ENCODE measurements at regions of chr20 and their contacts with region 1.

Region 1: DNA sequence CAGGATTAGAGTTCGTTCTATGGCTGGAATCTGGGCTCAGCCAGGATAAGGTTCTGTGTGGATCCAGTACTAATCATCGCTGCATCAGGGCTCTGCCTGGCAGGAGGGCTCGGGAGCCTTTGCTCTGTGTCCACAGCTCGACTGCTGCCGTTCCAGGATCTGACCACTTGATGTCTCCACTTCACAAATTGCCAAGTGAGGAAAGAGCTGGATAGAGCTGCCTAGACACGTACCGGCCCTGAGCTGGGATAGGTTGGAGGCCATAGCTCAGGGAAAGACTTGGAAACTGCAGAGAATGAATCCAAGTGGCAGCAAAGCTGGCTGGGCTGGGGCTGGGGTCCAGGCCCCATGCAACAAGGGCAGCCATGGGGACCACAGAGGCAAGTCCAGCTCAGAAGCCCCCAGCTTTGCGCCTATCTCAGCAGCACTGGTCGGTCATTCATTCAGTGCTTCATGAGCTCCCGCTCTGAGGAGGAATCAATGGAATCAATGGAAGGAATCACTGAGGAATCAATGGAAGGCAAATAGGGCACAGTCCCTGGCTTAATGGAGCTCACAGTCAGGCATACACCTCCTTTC is 38.0 kb upstream of the TOP1 start:
- DNase-seq: peak; percentile 80
- H3K4me3 Mint-ChIP-seq: no peak overlapping the region
- H3K27ac Mint-ChIP-seq: peak overlapping the region; percentile 71
- H3K4me1 Mint-ChIP-seq: peaks cover 42% of the 10 kb centered on the region
- H3K27me3 Mint-ChIP-seq: peaks cover 2% of the 10 kb centered on the region

Region 2: GRCh38 chr20:40931410-40932044 is 59.1 kb before region 1 on chr20:
- CTCF ChIA-PET with region 1: no interaction called
- DNase-seq: no peak
- H3K4me3 Mint-ChIP-seq: no peak overlapping the region
- H3K27ac Mint-ChIP-seq: no peak overlapping the region
- H3K4me1 Mint-ChIP-seq: no peaks in the 10 kb centered on the region
- H3K27me3 Mint-ChIP-seq: peaks cover 11% of the 10 kb centered on the region

Region 3: GRCh38 chr20:40970201-40970600 is 20.4 kb before region 1 on chr20:
- CTCF ChIA-PET with region 1: interaction called, 21 read pairs
- DNase-seq: no peak
- H3K4me3 Mint-ChIP-seq: no peak overlapping the region
- H3K27ac Mint-ChIP-seq: no peak overlapping the region
- H3K4me1 Mint-ChIP-seq: peaks cover 11% of the 10 kb centered on the region
- H3K27me3 Mint-ChIP-seq: peaks cover 52% of the 10 kb centered on the region

Region 4: GRCh38 chr20:41018143-41018542 is 27.5 kb after region 1 on chr20:
- CTCF ChIA-PET with region 1: interaction called, 11 read pairs
- DNase-seq: no peak
- H3K4me3 Mint-ChIP-seq: no peak overlapping the region
- H3K27ac Mint-ChIP-seq: no peak overlapping the region
- H3K4me1 Mint-ChIP-seq: no peaks in the 10 kb centered on the region
- H3K27me3 Mint-ChIP-seq: peaks cover 23% of the 10 kb centered on the region

Region 5: DNA sequence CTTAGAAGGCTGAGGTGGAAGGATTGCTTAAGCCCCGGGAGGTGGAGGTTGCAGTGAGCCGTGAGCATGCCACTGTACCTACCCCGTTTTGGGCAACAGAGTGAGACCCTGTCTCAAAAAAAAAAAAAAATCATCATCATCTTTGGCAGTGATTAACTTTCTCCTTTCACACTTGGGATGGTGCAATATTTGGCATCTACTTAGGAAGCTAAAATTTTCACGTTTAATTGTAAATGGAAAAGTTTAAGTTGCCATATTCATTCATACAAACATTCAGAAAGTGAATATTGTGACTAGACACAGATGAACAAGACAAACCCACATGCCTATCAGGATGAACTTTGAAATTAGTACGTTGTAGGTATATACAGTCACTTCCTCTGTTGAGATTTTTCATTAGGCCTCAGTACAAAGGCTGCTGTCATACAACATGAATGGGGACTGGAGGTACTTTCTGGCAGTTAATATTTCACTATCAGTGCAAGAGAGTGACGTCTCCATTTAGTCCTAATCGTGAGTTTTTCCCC is 48.3 kb after region 1 on chr20:
- CTCF ChIA-PET with region 1: interaction called, 23 read pairs
- DNase-seq: no peak
- H3K4me3 Mint-ChIP-seq: no peak overlapping the region
- H3K27ac Mint-ChIP-seq: no peak overlapping the region
- H3K4me1 Mint-ChIP-seq: peaks cover 83% of the 10 kb centered on the region
- H3K27me3 Mint-ChIP-seq: no peaks in the 10 kb centered on the region

Region 6: GRCh38 chr20:41078329-41078728 is 87.7 kb after region 1 on chr20:
- CTCF ChIA-PET with region 1: interaction called, 53 read pairs
- DNase-seq: no peak
- H3K4me3 Mint-ChIP-seq: no peak overlapping the region
- H3K27ac Mint-ChIP-seq: peak overlapping the region; percentile 77
- H3K4me1 Mint-ChIP-seq: peaks cover 55% of the 10 kb centered on the region
- H3K27me3 Mint-ChIP-seq: no peaks in the 10 kb centered on the region

Region 7: GRCh38 chr20:41293269-41294037 is 302.8 kb after region 1 on chr20:
- CTCF ChIA-PET with region 1: no interaction called
- DNase-seq: no peak
- H3K4me3 Mint-ChIP-seq: no peak overlapping the region
- H3K27ac Mint-ChIP-seq: no peak overlapping the region
- H3K4me1 Mint-ChIP-seq: no peaks in the 10 kb centered on the region
- H3K27me3 Mint-ChIP-seq: no peaks in the 10 kb centered on the region